Activated T-helper 2 cell treated with anti-CD3 and anti-CD28 coated beads, Interferon-gamma antibody, Interleukin-2, Interleukin-4, amounts not matched to agents 10 μg/mL and 5 μg/mL and 100 μg/mL, durations not matched to agents 14 hours and 24 hours and 36 hours (primary cell): ENCODE measurements at regions of chr2 and their contacts with region 1.

Region 1: GRCh38 chr2:55419679-55420438 is at the start of gene CCDC88A:
- DNase-seq: peak; percentile 86
- H3K4me3 Mint-ChIP-seq: peak within 1 kb of the TSS; percentile 91
- H3K27ac Mint-ChIP-seq: peak within 1 kb of the TSS; percentile 69
- H3K4me1 Mint-ChIP-seq: peaks cover 27% of the 10 kb centered on the region
- H3K27me3 Mint-ChIP-seq: peaks cover 29% of the 10 kb centered on the region
- total RNA-seq, gene CCDC88A: 19.0 and 19.8 TPM in 2 replicates

Region 2: DNA sequence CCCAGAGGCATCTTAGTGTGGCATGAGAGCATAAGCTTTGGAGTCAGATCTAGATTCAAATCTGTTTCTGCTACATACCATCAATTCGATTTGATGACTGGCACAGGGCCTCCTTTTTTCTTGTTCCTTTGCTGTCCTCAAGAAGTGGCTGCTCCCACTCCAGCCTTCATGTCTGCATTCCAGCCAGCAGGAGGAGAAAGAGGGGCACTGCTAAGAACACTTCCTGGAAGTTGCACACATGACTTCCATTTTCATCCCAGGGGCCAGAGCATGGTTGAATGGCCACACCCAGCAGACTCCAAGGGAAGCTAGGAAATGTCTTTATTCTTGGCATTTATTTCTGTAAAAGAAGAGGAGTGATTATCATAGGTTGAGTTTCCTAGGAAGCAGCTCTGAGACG is 646.0 kb before region 1 on chr2:
- intact Hi-C with region 1: no loop called
- DNase-seq: no peak
- H3K4me3 Mint-ChIP-seq: no peak overlapping the region
- H3K27ac Mint-ChIP-seq: no peak overlapping the region
- H3K4me1 Mint-ChIP-seq: no peaks in the 10 kb centered on the region
- H3K27me3 Mint-ChIP-seq: no peaks in the 10 kb centered on the region

Region 3: GRCh38 chr2:54899576-54900200 is 520.2 kb before region 1 on chr2:
- intact Hi-C with region 1: loop called (anchors 10 kb)
- DNase-seq: no peak
- H3K4me3 Mint-ChIP-seq: no peak overlapping the region
- H3K27ac Mint-ChIP-seq: no peak overlapping the region
- H3K4me1 Mint-ChIP-seq: peaks cover 18% of the 10 kb centered on the region
- H3K27me3 Mint-ChIP-seq: no peaks in the 10 kb centered on the region

Region 4: GRCh38 chr2:55232084-55232862 is 187.6 kb before region 1 on chr2 and contains the starts of genes CLHC1 and RPS27A:
- intact Hi-C with region 1: loop called (anchors 2 kb)
- DNase-seq: peak; percentile 89
- H3K4me3 Mint-ChIP-seq: peak within 1 kb of the TSS; percentile 99
- H3K27ac Mint-ChIP-seq: peak within 1 kb of the TSS; percentile 95
- H3K4me1 Mint-ChIP-seq: peaks cover 43% of the 10 kb centered on the region
- H3K27me3 Mint-ChIP-seq: no peaks in the 10 kb centered on the region
- total RNA-seq, gene CLHC1: 12.0 and 12.3 TPM in 2 replicates
- total RNA-seq, gene RPS27A: 1,030 and 1,063 TPM in 2 replicates

Region 5: DNA sequence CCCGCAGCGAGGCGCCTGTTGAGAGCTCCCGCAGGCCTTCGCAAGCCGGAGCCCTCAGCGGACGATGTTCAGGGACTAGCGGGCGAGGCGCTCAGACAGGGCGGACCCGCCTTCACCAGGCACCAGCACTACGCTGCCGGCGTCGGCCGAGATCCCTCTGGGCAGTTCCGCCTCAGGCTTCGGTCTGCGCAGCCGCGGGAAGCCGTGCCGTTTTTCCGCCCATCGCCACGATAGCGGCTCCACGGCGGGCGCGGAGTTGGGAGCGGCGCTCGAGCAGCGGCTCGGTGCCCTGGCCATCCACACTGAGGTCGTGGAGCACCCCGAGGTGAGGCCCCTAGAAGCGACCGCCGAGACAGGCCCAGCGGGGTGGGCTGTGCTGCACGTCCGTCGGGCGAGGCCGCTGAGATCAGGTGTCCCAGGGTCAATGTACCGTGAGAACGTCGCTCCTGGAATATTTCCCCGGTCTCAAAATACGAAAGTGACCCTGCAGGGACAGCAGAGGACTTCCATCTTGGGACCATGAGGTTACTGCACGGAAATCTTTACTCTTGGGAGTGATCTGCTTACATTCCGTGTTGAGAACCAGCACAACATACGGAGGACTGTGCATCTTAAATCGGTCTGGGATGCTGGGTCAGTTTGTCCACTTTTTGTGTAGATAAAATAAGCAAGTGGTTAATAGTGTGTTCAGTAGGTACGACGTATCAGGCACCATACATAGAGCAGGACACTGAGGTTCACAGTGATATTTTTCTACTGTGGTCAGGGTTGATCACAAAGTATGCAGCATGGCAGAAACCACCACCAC is 137.5 kb before region 1 on chr2:
- intact Hi-C with region 1: loop called (anchors 1 kb)
- DNase-seq: peak; percentile 85
- H3K4me3 Mint-ChIP-seq: peak overlapping the region; percentile 83
- H3K27ac Mint-ChIP-seq: peak overlapping the region; percentile 85
- H3K4me1 Mint-ChIP-seq: peaks cover 11% of the 10 kb centered on the region
- H3K27me3 Mint-ChIP-seq: peaks cover 2% of the 10 kb centered on the region

Region 6: DNA sequence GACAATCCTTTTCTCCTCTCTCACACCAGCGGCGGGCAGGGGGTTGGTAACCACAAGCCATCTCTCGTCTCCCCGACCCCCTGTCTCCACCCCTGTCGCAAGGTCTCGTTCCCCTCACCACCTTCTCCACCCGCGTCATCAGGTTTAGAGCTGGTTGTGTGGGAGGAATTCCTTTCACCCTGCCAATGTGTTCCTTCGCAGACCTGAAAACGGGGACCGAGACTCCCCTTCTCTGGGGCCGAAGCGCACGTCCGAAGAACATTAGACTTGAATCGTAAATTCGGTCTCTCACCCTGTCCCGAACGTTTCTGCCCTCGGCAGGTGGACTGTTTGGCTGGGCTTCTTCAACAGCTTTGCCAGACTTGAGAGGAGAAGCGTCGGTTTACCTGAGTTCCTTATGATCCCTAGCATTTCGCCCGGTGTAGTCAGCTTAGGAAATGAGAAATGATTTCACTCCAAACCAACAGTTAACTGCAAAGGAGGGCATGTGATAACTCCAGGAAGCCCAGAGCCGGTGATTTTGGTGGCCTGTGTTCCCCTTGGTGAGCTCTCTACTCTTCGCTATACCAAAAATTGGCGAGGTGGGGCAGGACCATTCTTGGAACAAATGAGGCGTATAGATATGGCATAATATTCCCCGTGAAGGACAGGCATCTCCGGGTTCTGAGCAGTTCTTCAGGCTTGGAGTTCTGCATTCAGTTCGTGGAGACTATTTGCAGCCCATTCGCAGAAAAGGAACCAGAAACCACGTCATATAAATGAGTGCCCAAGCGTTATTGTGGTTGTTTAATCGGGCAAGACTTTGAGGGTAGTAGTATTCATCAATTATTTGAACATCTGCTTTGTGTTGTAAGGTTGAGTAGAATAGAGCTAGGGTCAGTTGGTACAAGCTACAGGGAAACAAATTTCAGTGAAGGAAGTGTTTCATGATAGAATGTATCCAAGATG is 100.4 kb after region 1 on chr2:
- intact Hi-C with region 1: loop called (anchors 5 kb)
- DNase-seq: no peak
- H3K4me3 Mint-ChIP-seq: peak overlapping the region; percentile 93
- H3K27ac Mint-ChIP-seq: peak overlapping the region; percentile 86
- H3K4me1 Mint-ChIP-seq: peaks cover 13% of the 10 kb centered on the region
- H3K27me3 Mint-ChIP-seq: no peaks in the 10 kb centered on the region